Heart left ventricle (tissue), 16 donors: ENCODE measurements at regions of chr19 and their contacts with region 1.

Region 1: DNA sequence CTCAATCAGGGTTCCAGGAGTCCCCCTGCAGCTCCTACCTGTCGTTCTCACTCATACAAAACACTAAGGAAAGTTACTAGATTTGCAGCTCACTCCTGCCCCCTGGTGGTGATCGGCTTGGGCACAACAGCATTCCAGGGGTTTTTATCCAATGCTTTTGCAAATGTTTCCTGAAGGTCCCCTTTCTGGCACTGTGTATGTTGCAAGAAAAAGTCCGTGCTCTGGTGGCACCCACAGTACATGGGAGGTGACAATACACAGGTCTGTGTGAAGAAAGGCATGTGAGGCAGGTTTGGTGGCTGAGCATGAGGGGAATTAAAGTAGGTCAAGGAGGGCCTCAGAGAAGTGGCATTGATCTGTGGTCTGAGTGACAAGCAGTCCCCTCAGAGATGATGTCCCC is 8.6 kb upstream of the TYK2 start:
- DNase-seq: peak; percentile 77 to 89 (median 85)
- ATAC-seq: peak; percentile 39 to 71 (median 62)
- H3K4me3 ChIP-seq: no peak overlapping the region
- H3K27ac ChIP-seq: no peak overlapping the region
- H3K4me1 ChIP-seq: peaks cover 0 to 13% (median 6%) of the 10 kb centered on the region in 12 donors
- H3K27me3 ChIP-seq: no peaks in the 10 kb centered on the region
- CTCF ChIP-seq: peak; percentile 88 to 98 (median 94)
- POLR2A ChIP-seq: no peak

Region 2: DNA sequence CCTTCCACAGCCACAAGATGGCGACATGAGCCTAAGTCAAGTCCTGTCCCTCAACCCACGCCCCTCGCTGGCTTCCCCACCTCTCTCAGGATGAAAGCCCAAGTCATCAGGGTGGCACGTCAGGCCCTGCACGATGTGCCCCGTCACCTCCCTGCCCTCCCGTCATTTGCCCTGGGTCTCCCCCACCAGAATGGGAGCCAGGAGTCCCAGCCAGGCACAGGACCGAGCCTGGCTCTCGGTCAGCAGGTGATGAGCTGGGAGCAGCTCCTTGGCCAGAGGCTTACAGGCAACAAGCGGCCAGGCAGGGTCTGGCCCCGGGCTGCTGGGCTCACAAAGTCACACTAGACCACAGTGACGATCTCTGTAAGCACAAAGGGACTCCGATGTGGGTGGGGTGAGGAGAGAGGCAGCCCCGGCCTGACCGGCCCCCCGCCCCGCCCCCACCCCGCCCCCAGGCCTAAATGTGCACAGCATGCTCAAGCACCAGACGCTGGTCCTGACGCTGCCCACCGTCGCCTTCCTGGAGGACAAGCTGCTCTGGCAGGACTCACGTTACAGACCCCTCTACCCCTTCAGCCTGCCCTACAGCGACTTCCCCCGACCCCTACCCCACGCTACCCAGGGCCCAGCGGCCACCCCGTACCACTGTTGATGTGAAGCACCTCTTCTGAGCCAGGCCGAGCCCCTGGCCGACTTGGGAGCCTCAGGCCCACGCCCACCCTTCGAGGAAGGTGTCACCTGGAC is 129.6 kb before region 1 on chr19:
- intact Hi-C with region 1: loop called in 8 of 10 experiments (anchors 1 to 5 kb)
- DNase-seq: peak; percentile 84 to 91 (median 88)
- ATAC-seq: peak in 3 of 4 donors; percentile 51 to 70 (median 54)
- H3K4me3 ChIP-seq: no peak overlapping the region
- H3K27ac ChIP-seq: peak overlapping the region in 3 of 12 donors; percentile 19 to 39 (median 37)
- H3K4me1 ChIP-seq: peaks cover 0 to 11% (median 6%) of the 10 kb centered on the region in 12 donors
- H3K27me3 ChIP-seq: no peaks in the 10 kb centered on the region
- CTCF ChIP-seq: peak; percentile 55 to 79 (median 73)
- POLR2A ChIP-seq: no peak

Region 3: DNA sequence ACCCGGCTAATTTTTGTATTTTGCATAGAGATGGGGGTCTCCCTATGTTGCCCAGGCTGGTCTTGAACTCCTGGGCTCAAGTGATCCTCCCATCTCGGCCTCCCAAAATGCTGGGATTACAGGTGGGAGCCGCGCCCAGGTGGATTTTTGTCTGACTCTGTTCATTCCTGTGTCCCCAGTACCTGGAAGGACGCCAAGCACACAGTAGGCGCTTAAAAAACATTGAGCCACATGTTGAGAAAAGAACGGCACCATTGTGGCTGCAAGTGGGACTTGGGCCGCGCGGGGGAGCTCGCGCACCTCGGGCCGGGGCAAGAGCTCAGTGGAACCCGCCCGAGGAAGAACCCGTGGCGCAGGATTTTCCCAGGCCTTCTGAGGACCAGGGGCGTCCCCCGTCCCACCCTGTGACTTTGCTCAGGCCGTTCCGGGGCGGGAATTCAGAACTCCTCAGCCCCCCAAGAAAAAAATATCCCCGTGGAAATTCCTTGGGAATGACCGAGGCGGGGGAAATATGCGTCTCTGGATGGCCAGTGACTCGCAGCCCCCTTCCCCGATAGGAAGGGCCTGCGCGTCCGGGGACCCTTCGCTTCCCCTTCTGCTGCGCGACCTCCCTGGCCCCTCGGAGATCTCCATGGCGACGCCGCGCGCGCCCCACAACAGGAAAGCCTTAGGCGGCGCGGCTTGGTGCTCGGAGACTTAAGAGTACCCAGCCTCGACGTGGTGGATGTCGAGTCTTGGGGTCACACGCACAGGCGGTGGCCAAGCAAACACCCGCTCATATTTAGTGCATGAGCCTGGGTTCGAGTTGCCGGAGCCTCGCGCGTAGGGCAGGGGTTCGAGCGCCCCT is 119.4 kb before region 1 on chr19:
- intact Hi-C with region 1: loop called (anchors 1 to 2 kb)
- DNase-seq: peak; percentile 87 to 94 (median 90)
- ATAC-seq: peak; percentile 79 to 88 (median 84)
- H3K4me3 ChIP-seq: peak overlapping the region; percentile 19 to 78 (median 60)
- H3K27ac ChIP-seq: peak overlapping the region; percentile 69 to 99 (median 88)
- H3K4me1 ChIP-seq: peaks cover 0 to 73% (median 17%) of the 10 kb centered on the region in 12 donors
- H3K27me3 ChIP-seq: peaks cover 0 to 23% (median 3%) of the 10 kb centered on the region in 9 donors
- CTCF ChIP-seq: peak; percentile 94 to 98 (median 96)
- POLR2A ChIP-seq: no peak

Region 4: GRCh38 chr19:10431943-10432735 is 43.2 kb after region 1 on chr19:
- intact Hi-C with region 1: no loop called
- DNase-seq: peak; percentile 68 to 89 (median 78)
- ATAC-seq: peak; percentile 17 to 72 (median 70)
- H3K4me3 ChIP-seq: peak overlapping the region; percentile 52 to 94 (median 70)
- H3K27ac ChIP-seq: peak overlapping the region in 11 of 12 donors; percentile 43 to 84 (median 66)
- H3K4me1 ChIP-seq: peaks cover 0 to 48% (median 20%) of the 10 kb centered on the region in 12 donors
- H3K27me3 ChIP-seq: peaks cover 0 to 9% (median 0%) of the 10 kb centered on the region in 9 donors
- CTCF ChIP-seq: peak in 1 of 12 donors; percentile 12
- POLR2A ChIP-seq: peak in 1 of 2 donors; percentile 18